ENCODE measurements at regions of chr4 and their contacts with region 1.

Region 1: DNA sequence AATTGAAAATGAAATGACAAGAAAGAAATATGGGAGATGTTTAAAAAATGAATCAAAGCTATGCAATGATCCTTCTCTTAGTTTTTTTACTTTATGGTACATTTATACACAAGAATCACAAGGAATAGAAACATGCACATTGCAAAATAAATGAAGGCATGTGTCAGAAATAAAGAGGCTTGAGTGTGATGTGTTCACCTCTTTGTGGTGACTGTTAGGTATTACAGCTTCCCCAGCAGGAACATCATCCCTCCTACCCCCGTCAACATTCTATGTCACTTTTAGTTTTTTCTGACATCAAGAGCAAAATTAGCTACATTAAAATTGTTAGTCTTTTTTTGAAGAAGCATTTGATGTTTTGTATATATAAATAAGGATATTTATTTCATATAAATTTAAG is 214.8 kb downstream of the SLC4A4 start:
- DNase-seq: peak; percentile 64
- ATAC-seq: peak; percentile 53; the same call in 1 of the 2 replicates
- H3K4me3 ChIP-seq: no peak overlapping the region
- H3K27ac ChIP-seq: no peak overlapping the region
- H3K4me1 ChIP-seq: peaks cover 9% of the 10 kb centered on the region
- H3K27me3 ChIP-seq: no peaks in the 10 kb centered on the region
- CTCF ChIP-seq: peak; percentile 63
- POLR2A ChIP-seq: no peak
- RAD21 ChIP-seq: peak; percentile 85

Region 2: GRCh38 chr4:70895811-70896491 is 657.7 kb before region 1 on chr4:
- CTCF ChIA-PET with region 1: no interaction called
- POLR2A ChIA-PET with region 1: no interaction called
- dilution Hi-C with region 1: no loop called
- in situ Hi-C with region 1: loop called (anchors 25 kb)
- intact Hi-C with region 1: no loop called
- DNase-seq: no peak
- ATAC-seq: peak; percentile 35
- H3K4me3 ChIP-seq: no peak overlapping the region
- H3K27ac ChIP-seq: no peak overlapping the region
- H3K4me1 ChIP-seq: no peaks in the 10 kb centered on the region
- H3K27me3 ChIP-seq: no peaks in the 10 kb centered on the region
- CTCF ChIP-seq: no peak
- POLR2A ChIP-seq: no peak
- RAD21 ChIP-seq: no peak

Region 3: GRCh38 chr4:71189438-71189837 is 364.2 kb before region 1 on chr4:
- CTCF ChIA-PET with region 1: interaction called, 5 read pairs
- POLR2A ChIA-PET with region 1: no interaction called
- dilution Hi-C with region 1: no loop called
- in situ Hi-C with region 1: loop called (anchors 10 kb)
- intact Hi-C with region 1: loop called (anchors 1 kb)
- DNase-seq: peak; percentile 86
- ATAC-seq: peak; percentile 28
- H3K4me3 ChIP-seq: peak overlapping the region; percentile 57
- H3K27ac ChIP-seq: peak overlapping the region; percentile 25; the same call in 1 of the 2 replicates
- H3K4me1 ChIP-seq: peaks cover 2% of the 10 kb centered on the region; the same call in 1 of the 2 replicates
- H3K27me3 ChIP-seq: no peaks in the 10 kb centered on the region
- CTCF ChIP-seq: peak; percentile 42
- POLR2A ChIP-seq: peak; percentile 62; the same call in 1 of the 2 replicates
- RAD21 ChIP-seq: peak; percentile 61

Region 4: DNA sequence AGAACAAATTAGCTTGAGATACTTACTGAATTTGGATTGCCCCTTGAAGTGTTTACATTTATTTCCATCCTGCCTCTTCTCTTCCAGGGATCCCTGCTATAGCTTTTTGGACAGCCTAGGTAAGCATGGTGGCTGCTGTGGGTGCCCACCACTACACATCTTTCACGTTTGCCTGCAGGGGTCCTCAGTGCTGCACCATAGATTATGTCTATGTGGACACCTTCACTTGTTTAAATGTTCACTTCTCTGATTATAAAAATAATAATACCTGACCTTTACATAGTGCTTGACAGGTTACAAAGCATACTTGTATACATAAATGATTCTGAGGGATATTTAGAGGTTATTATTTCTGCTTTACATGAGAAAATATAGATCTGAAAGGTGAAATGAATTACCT is 282.7 kb before region 1 on chr4:
- CTCF ChIA-PET with region 1: interaction called, 10 read pairs
- POLR2A ChIA-PET with region 1: no interaction called
- dilution Hi-C with region 1: no loop called
- in situ Hi-C with region 1: no loop called
- intact Hi-C with region 1: loop called (anchors 2 kb)
- DNase-seq: peak; percentile 45
- ATAC-seq: no peak
- H3K4me3 ChIP-seq: no peak overlapping the region
- H3K27ac ChIP-seq: no peak overlapping the region
- H3K4me1 ChIP-seq: peaks cover 14% of the 10 kb centered on the region
- H3K27me3 ChIP-seq: no peaks in the 10 kb centered on the region
- CTCF ChIP-seq: peak; percentile 52
- POLR2A ChIP-seq: no peak
- RAD21 ChIP-seq: peak; percentile 72

Region 5: GRCh38 chr4:71584585-71584984 is 31.0 kb after region 1 on chr4:
- CTCF ChIA-PET with region 1: no interaction called
- POLR2A ChIA-PET with region 1: no interaction called
- dilution Hi-C with region 1: no loop called
- in situ Hi-C with region 1: no loop called
- intact Hi-C with region 1: no loop called
- DNase-seq: no peak
- ATAC-seq: no peak
- H3K4me3 ChIP-seq: no peak overlapping the region
- H3K27ac ChIP-seq: no peak overlapping the region
- H3K4me1 ChIP-seq: no peaks in the 10 kb centered on the region
- H3K27me3 ChIP-seq: no peaks in the 10 kb centered on the region
- CTCF ChIP-seq: no peak
- POLR2A ChIP-seq: no peak
- RAD21 ChIP-seq: no peak

Measured in IMR-90 (cell line).